ENCODE measurements at regions of chrX and their contacts with region 1.

Region 1: GRCh38 chrX:32087663-32088062 is 1015.8 kb upstream of the FTHL17 start:
- DNase-seq: no peak
- H3K4me3 Mint-ChIP-seq: no peak overlapping the region
- H3K27ac Mint-ChIP-seq: no peak overlapping the region
- H3K4me1 Mint-ChIP-seq: no peaks in the 10 kb centered on the region
- H3K27me3 Mint-ChIP-seq: no peaks in the 10 kb centered on the region

Region 2: DNA sequence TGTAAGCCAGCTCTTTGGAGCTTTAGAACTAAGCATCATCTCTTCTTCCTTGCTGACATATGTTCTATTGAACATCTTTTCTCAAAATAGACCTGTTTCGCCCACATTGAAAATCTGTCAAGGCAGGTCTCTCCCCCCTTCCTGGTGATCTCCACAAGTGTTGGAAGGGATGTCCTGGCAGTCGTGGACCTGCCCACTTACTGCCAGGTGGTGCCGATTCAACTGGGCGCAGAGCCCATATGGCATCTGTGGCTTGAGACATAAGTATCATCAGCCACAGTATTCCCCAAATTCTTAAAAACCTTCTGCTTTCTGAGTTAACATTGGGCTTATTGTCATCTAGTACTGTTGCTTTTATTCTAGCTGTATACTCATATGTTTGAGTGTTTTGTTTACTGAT is 46.5 kb before region 1 on chrX:
- intact Hi-C with region 1: no loop called
- DNase-seq: no peak
- H3K4me3 Mint-ChIP-seq: no peak overlapping the region
- H3K27ac Mint-ChIP-seq: no peak overlapping the region
- H3K4me1 Mint-ChIP-seq: no peaks in the 10 kb centered on the region
- H3K27me3 Mint-ChIP-seq: no peaks in the 10 kb centered on the region

Region 3: DNA sequence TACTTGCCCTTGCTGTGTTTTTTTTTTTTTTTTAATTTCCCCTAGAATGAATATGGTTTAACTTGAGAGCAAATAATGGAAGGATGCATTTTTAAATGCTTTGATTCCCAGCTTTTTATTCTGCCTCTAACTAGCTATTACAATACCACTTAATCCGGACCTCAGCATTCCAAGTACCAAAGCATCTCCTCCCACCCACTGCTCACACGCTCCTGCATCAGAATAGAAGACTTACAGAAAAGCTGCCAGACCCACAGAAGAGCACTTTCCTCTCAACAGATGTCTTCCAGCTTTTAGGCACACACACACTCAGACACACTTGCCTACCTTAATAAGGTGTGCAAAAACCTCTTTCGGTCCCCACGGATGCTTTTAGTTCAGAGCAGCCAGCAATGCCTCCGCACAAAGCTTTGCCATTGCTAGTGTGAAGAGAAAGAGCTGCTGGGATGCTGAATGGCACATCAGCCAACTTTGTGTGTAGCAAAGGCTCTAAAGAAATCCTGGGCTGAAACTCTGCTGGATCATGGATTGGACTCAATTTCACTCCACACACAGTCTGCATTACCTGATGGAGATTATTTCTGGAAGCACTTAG is 67.5 kb after region 1 on chrX:
- intact Hi-C with region 1: loop called (anchors 10 kb)
- DNase-seq: no peak
- H3K4me3 Mint-ChIP-seq: no peak overlapping the region
- H3K27ac Mint-ChIP-seq: no peak overlapping the region
- H3K4me1 Mint-ChIP-seq: no peaks in the 10 kb centered on the region
- H3K27me3 Mint-ChIP-seq: no peaks in the 10 kb centered on the region

Measured in activated T-helper 1 cell treated with anti-CD3 and anti-CD28 coated beads, Interleukin-12 subunit alpha, Interleukin-12 subunit beta, Interleukin-2, Interleukin-4 antibody, amounts not matched to agents 30 ng/mL and 10 ng/mL and 1 ng/mL, durations not matched to agents 14 hours and 24 hours and 36 hours (primary cell).